ENCODE measurements at regions of chr10 and their contacts with region 1.

Region 1: GRCh38 chr10:88152720-88153119 is 289.3 kb downstream of the PTEN start:
- DNase-seq: peak; percentile 77
- H3K4me3 Mint-ChIP-seq: no peak overlapping the region
- H3K27ac Mint-ChIP-seq: peak overlapping the region; percentile 89
- H3K4me1 Mint-ChIP-seq: peaks cover 22% of the 10 kb centered on the region
- H3K27me3 Mint-ChIP-seq: no peaks in the 10 kb centered on the region

Region 2: GRCh38 chr10:87913156-87913921 is 239.4 kb before region 1 on chr10:
- CTCF ChIA-PET with region 1: no interaction called
- POLR2A ChIA-PET with region 1: no interaction called
- intact Hi-C with region 1: no loop called
- DNase-seq: no peak
- H3K4me3 Mint-ChIP-seq: no peak overlapping the region
- H3K27ac Mint-ChIP-seq: no peak overlapping the region
- H3K4me1 Mint-ChIP-seq: peaks cover 27% of the 10 kb centered on the region
- H3K27me3 Mint-ChIP-seq: no peaks in the 10 kb centered on the region

Region 3: DNA sequence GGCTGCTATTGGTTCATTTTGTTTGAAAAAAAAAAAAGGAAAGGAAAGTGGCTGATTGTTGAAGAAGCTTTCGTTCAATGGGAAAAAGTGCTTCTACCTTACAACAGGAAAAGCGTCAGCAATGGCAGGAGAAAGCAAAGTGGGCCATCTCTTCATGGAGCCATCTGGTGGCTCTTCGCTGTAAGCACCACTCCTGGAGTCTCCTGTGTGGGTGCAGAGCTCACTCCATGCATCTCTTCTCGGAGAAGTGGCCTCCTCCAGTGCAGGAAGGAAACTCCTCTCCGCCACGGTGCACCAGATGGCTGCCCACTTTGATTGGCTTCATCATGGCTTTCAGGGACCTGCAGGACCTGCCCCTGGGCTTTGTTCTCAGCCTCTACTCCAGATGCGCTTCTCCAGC is 38.4 kb before region 1 on chr10:
- CTCF ChIA-PET with region 1: interaction called, 4 read pairs
- POLR2A ChIA-PET with region 1: interaction called, 3 read pairs
- intact Hi-C with region 1: loop called (anchors 2 kb)
- DNase-seq: peak; percentile 25
- H3K4me3 Mint-ChIP-seq: no peak overlapping the region
- H3K27ac Mint-ChIP-seq: no peak overlapping the region
- H3K4me1 Mint-ChIP-seq: peaks cover 6% of the 10 kb centered on the region
- H3K27me3 Mint-ChIP-seq: peaks cover 2% of the 10 kb centered on the region

Region 4: GRCh38 chr10:88138319-88138848 is 14.3 kb before region 1 on chr10:
- CTCF ChIA-PET with region 1: no interaction called
- POLR2A ChIA-PET with region 1: interaction called, 4 read pairs
- intact Hi-C with region 1: loop called (anchors 1 kb)
- DNase-seq: no peak
- H3K4me3 Mint-ChIP-seq: no peak overlapping the region
- H3K27ac Mint-ChIP-seq: no peak overlapping the region
- H3K4me1 Mint-ChIP-seq: peaks cover 9% of the 10 kb centered on the region
- H3K27me3 Mint-ChIP-seq: no peaks in the 10 kb centered on the region

Region 5: GRCh38 chr10:88168171-88169036 is 15.7 kb after region 1 on chr10:
- CTCF ChIA-PET with region 1: no interaction called
- POLR2A ChIA-PET with region 1: no interaction called
- intact Hi-C with region 1: loop called (anchors 2 kb)
- DNase-seq: no peak
- H3K4me3 Mint-ChIP-seq: no peak overlapping the region
- H3K27ac Mint-ChIP-seq: no peak overlapping the region
- H3K4me1 Mint-ChIP-seq: peaks cover 39% of the 10 kb centered on the region
- H3K27me3 Mint-ChIP-seq: no peaks in the 10 kb centered on the region